PC-9 (cell line): ENCODE measurements at regions of chr2 and their contacts with region 1.

Region 1: DNA sequence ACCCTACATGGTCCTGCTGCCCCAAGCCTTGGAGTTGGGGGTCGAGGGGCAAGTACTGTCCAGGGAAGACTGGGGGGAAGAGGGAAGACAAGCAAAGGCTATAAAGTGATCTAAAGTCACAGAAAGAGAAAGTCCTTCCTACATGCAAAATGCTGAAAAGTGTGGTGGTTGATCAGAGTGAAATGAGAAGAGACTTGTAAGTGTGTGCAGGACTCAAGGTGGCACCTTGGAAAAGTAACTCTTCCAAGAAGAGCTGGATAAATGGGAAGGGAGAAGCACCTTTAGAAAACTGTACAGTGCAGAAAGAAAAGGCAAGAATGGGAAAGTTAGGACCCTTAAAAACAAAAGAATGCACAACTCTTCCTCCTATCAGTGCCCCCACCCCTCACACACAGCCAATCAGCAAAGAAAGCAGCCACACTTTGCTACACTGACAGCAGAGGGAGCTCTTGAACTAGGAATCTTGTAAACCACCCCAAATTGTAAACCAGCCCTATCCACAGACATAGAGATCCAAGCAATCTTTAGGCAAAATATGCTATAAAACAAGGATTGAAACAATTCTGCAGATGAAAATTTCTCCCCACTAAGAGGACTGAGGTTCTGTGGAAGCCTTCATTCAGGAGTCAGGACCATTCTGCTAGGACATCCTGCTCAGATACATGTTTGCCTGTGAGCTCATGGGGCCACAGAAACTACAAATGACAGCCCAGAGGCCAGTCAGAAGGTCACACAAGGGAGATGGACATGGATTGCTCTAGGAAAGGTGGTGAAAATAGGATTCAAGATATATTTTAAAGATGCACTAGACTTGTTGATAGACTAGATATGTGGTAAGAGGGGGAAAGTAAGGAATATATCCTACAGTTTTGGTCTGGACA is 146.4 kb downstream of the FTCDNL1 start:
- DNase-seq: peak in 1 of 2 experiments; percentile 37
- H3K4me3 ChIP-seq: no peak overlapping the region
- H3K27ac ChIP-seq: no peak overlapping the region
- H3K4me1 ChIP-seq: no peaks in the 10 kb centered on the region
- H3K27me3 ChIP-seq: no peaks in the 10 kb centered on the region
- CTCF ChIP-seq: peak; percentile 91

Region 2: GRCh38 chr2:198994678-198995077 is 709.9 kb before region 1 on chr2:
- CTCF ChIA-PET with region 1: interaction called, 24 read pairs
- POLR2A ChIA-PET with region 1: no interaction called
- intact Hi-C with region 1: no loop called
- DNase-seq: no peak
- H3K4me3 ChIP-seq: no peak overlapping the region
- H3K27ac ChIP-seq: no peak overlapping the region
- H3K4me1 ChIP-seq: no peaks in the 10 kb centered on the region
- H3K27me3 ChIP-seq: no peaks in the 10 kb centered on the region
- CTCF ChIP-seq: no peak

Region 3: DNA sequence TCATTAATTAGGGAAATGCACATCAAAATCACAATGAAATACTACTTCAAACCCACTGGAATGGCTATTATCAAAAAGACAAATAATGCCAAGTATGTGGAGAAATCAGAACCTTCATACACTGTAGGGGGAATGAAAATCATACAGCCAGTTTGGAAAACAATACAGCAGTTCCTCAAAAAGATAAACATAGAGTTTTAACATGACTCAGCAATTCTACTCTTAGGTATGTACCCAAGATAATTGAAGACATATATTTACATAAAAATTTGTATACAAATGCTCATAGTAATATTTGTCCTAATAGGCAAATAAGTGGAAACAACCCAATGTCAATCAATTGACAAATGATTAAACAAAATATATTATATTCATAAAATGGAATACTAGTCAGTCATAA is 201.4 kb before region 1 on chr2:
- CTCF ChIA-PET with region 1: no interaction called
- POLR2A ChIA-PET with region 1: no interaction called
- intact Hi-C with region 1: no loop called
- DNase-seq: no peak
- H3K4me3 ChIP-seq: no peak overlapping the region
- H3K27ac ChIP-seq: no peak overlapping the region
- H3K4me1 ChIP-seq: no peaks in the 10 kb centered on the region
- H3K27me3 ChIP-seq: 0 out of 2 replicates have a peak, but pooled peaks cover 3% of the 10 kb centered on the region
- CTCF ChIP-seq: no peak

Region 4: GRCh38 chr2:199739413-199740110 is 35.0 kb after region 1 on chr2:
- CTCF ChIA-PET with region 1: interaction called, 5 read pairs
- POLR2A ChIA-PET with region 1: no interaction called
- intact Hi-C with region 1: loop called (anchors 1 kb)
- DNase-seq: peak in 1 of 2 experiments; percentile 58
- H3K4me3 ChIP-seq: no peak overlapping the region
- H3K27ac ChIP-seq: no peak overlapping the region
- H3K4me1 ChIP-seq: peaks cover 14% of the 10 kb centered on the region
- H3K27me3 ChIP-seq: no peaks in the 10 kb centered on the region
- CTCF ChIP-seq: peak; percentile 94

Region 5: DNA sequence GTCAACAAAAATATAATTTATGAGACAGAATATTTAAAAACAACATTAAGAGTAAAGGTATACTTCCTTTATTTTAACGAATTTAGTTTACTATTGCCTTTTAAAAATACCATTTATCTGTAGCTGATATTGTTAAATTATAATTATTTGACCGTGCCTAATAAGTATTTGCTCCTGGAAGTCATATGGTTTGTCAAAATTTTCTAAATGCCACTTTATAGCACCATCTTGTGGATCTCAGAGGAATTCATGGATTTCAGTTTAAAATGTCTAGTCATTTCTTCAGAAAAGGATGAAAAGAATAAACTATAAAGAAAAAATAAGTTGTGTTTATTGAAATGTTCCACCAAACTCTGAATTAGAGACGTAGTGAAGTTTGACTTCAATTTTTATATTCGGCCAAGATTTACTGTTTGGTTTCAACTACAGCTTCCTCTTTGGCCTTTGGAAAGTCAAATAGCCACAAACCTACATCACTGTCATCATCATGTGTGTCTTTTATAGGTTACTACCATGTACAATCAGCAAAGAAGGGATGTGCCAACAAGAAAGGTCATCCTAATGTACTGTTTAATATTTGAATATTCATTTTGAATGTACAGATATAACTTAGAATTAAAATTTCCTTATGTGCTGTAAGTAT is 156.7 kb after region 1 on chr2:
- CTCF ChIA-PET with region 1: no interaction called
- POLR2A ChIA-PET with region 1: no interaction called
- intact Hi-C with region 1: loop called (anchors 1 kb)
- DNase-seq: no peak
- H3K4me3 ChIP-seq: no peak overlapping the region
- H3K27ac ChIP-seq: no peak overlapping the region
- H3K4me1 ChIP-seq: no peaks in the 10 kb centered on the region
- H3K27me3 ChIP-seq: no peaks in the 10 kb centered on the region
- CTCF ChIP-seq: peak; percentile 70

Region 6: GRCh38 chr2:199940373-199940772 is 235.8 kb after region 1 on chr2:
- CTCF ChIA-PET with region 1: interaction called, 4 read pairs
- POLR2A ChIA-PET with region 1: no interaction called
- intact Hi-C with region 1: loop called (anchors 2 kb)
- DNase-seq: peak in 1 of 2 experiments; percentile 49
- H3K4me3 ChIP-seq: no peak overlapping the region
- H3K27ac ChIP-seq: no peak overlapping the region
- H3K4me1 ChIP-seq: no peaks in the 10 kb centered on the region
- H3K27me3 ChIP-seq: no peaks in the 10 kb centered on the region
- CTCF ChIP-seq: peak; percentile 66

Region 7: DNA sequence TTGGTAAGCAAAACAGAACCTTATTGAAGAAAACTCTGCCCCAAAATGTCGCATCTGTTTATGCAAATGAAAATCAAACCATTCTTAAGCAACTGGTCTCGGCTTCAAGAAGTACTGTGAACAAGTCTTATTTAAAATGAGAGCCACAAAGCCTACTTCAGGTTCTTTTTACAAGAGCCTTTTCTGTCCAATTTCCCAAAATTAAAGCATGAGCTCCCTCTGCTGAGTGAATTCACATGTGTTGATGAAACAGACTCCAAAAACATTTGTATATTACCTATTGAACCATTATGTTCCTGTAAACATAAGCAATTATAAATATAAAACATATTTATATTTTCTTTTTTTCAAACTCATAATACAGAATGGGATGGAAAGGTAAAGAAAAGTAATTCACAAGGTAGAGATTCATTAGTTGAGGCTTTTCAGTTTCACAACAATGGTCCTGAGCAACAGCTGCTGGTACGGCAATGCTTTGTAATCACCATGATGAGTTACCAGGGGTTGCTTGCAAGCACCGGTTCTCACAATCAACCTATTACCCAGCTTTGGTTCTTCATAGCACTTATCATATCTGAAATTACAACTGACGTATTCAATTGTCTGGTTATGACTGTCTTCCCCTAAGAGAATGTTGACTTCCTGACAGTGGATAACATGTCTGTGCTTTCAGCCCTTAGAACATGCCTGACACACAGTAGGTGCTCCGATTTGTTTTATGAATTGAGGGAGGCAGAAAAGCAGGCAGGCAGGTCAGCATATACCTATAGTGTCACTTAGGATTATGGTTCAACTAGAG is 998.7 kb after region 1 on chr2:
- CTCF ChIA-PET with region 1: no interaction called
- POLR2A ChIA-PET with region 1: no interaction called
- intact Hi-C with region 1: loop called (anchors 2 kb)
- DNase-seq: peak; percentile 27 to 65
- H3K4me3 ChIP-seq: no peak overlapping the region
- H3K27ac ChIP-seq: no peak overlapping the region
- H3K4me1 ChIP-seq: peaks cover 5% of the 10 kb centered on the region; the same call in 1 of the 2 replicates
- H3K27me3 ChIP-seq: no peaks in the 10 kb centered on the region
- CTCF ChIP-seq: peak; percentile 81